ENCODE measurements at regions of chr15 and their contacts with region 1.

Region 1: GRCh38 chr15:45198337-45199135 is 10.8 kb upstream of the SHF start:
- DNase-seq: peak; percentile 99
- H3K4me3 ChIP-seq: peak overlapping the region; percentile 54 to 62 (median 60)
- H3K27ac ChIP-seq: peak overlapping the region; percentile 93 to 98 (median 96)
- H3K4me1 ChIP-seq: peaks cover 0 to 17% (median 7%) of the 10 kb centered on the region in 4 donors
- H3K27me3 ChIP-seq: no peaks in the 10 kb centered on the region
- CTCF ChIP-seq: peak; percentile 41 to 82 (median 62)
- EP300 ChIP-seq: peak in 1 of 4 donors; percentile 76
- POLR2A ChIP-seq: peak; percentile 96 to 98

Region 2: DNA sequence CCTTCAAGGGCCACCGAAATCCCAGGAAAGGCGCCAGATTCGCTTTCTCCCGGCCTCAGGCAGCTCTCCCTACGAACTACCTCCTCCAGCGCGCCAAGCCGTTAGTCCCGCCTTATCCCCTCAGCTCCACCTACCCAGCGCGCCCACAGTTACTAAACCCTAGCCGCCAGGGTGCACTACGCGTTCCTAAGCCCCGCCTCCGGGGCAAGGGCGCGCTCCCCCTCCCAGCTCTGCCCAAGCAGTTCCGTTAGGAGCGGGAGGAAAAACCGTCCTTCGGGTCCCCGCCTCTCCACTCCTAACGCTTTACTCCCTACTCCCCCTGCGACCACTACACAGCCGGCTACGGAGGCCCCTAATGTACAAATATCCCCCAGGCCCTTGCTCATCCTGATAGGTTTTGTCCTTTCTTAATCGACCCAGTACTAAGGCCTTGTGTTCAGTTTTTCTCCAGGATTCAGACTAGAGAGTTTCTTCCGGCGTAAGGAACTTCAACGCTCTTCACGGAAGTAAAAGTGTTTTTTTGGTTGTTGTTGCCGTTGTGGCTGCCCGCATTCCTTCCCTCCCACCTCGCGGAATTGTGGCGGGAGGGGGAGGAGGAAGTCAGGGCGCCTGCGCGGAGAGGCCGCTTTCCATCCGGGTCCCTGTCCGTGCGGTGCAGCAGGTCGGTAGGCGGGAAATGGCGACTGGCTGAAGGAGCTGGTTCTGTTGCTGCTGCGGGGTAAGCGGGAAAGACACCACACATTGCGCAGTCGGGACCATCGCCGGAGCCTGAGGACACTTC is 771.4 kb before region 1 on chr15 and contains the start of gene CTDSPL2:
- intact Hi-C with region 1: loop called (anchors 10 kb)
- DNase-seq: peak; percentile 99
- H3K4me3 ChIP-seq: peak within 1 kb of the TSS; percentile 66 to 89 (median 82)
- H3K27ac ChIP-seq: peak within 1 kb of the TSS; percentile 92 to 95 (median 94)
- H3K4me1 ChIP-seq: peaks cover 0 to 33% (median 26%) of the 10 kb centered on the region in 4 donors
- H3K27me3 ChIP-seq: no peaks in the 10 kb centered on the region
- CTCF ChIP-seq: peak in 2 of 4 experiments; percentile 14 to 19
- EP300 ChIP-seq: no peak
- POLR2A ChIP-seq: peak; percentile 29 to 55
- total RNA-seq, gene CTDSPL2: 25.4 to 57.8 (median 44.9) TPM

Region 3: DNA sequence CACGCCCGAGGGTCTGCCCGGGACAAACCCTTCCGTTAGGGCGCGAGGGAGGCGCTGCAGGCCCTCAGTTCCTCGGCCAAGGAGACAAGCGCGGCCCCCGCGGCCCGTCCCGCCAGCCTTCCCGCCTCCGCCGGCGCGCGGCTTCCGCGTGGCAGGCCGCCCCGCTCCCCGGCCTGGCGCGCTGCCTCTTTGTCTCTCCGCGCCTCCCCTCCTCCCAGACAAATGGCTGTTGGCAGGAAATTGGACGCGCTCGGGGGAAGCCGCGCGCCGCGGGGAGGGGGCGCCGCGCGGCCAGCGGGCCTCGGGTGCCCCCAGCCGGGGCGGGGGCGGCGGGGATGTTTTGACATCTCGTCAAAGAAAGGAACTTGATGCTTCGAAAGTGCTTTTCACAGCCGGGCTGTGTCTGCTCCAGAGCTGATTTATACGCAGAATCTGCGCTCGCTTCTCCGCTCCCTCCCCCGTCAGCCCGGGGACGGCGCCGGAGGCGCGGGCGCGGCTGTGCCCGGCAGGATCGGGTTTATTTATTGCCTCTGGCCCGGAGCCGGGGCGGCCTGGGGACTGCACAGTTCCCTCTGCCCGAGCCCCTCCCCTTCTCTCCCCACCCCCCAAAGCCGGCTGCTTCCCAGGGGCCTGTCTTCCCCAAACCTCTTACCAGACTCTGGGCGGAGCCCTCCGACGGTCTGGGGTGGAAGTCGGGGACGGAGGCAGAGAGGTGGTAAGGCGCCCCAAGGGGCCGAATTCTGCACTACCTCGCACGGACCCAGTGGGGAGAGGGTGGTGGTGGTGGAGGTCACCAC is 31.5 kb before region 1 on chr15:
- intact Hi-C with region 1: loop called (anchors 1 kb)
- DNase-seq: peak; percentile 95
- H3K4me3 ChIP-seq: peak overlapping the region; percentile 46 to 64 (median 56)
- H3K27ac ChIP-seq: peak overlapping the region; percentile 90 to 99 (median 96)
- H3K4me1 ChIP-seq: peaks cover 0 to 33% (median 21%) of the 10 kb centered on the region in 4 donors
- H3K27me3 ChIP-seq: no peaks in the 10 kb centered on the region
- CTCF ChIP-seq: peak; percentile 42 to 77 (median 70)
- EP300 ChIP-seq: no peak
- POLR2A ChIP-seq: peak in 1 of 2 donors; percentile 45

Region 4: DNA sequence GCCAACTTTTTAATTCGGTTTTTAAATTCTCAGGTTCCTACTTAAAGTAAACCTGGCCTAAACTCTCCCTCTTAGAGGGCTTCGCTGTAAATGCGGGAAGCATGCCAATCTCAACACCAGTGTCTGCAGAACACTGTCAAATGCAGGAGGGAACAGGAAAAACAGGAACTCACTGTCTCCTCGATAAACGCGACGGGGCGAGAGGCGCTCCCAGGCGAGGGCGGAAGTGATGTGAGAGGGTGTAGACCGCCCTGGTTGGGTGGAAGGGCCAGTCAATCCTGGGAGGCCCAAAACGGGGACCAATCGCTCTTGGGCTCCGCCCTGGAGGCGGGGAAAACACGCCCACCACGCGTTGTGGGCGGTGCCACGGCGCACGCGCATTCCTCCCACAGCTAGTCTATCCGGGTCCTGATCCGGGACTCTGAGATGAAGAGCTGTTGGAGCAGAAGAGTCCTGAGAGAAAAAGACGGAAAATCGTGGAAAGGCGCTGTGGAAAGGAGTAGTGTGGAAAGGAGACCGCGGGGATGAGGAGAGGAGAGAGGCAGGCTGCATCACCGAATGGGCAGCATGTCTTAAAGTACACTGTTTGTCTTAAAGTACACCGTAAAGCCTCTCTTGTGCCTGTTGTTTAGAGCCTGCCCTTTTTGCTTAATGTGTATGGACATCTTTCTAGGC is 80.6 kb after region 1 on chr15:
- intact Hi-C with region 1: loop called (anchors 2 kb)
- DNase-seq: peak; percentile 99
- H3K4me3 ChIP-seq: peak overlapping the region; percentile 50 to 59 (median 54)
- H3K27ac ChIP-seq: peak overlapping the region; percentile 80 to 90 (median 84)
- H3K4me1 ChIP-seq: peaks cover 0 to 16% (median 10%) of the 10 kb centered on the region in 4 donors
- H3K27me3 ChIP-seq: no peaks in the 10 kb centered on the region
- CTCF ChIP-seq: no peak
- EP300 ChIP-seq: no peak
- POLR2A ChIP-seq: peak; percentile 85 to 87

Region 5: DNA sequence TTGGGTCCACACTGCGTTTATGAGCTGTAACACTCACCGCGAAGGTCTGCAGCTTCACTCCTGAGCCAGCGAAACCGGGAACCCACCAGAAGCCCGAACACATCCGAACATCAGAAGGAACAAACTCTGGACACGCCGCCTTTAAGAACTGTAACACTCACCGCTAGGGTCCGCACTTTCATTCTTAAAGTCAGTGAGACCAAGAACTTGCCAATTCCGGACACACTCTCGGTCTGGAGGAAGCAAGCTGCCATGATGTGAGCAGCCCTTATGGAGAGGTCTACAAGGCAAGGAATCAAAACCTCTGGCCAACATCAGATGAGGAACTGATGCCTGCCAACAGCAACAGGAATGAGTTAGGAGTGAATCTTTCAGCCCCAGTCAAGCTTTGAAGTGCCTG is 116.4 kb after region 1 on chr15:
- intact Hi-C with region 1: no loop called
- DNase-seq: no peak
- H3K4me3 ChIP-seq: no peak overlapping the region
- H3K27ac ChIP-seq: no peak overlapping the region
- H3K4me1 ChIP-seq: no peaks in the 10 kb centered on the region
- H3K27me3 ChIP-seq: no peaks in the 10 kb centered on the region
- CTCF ChIP-seq: no peak
- EP300 ChIP-seq: no peak
- POLR2A ChIP-seq: no peak

Region 6: DNA sequence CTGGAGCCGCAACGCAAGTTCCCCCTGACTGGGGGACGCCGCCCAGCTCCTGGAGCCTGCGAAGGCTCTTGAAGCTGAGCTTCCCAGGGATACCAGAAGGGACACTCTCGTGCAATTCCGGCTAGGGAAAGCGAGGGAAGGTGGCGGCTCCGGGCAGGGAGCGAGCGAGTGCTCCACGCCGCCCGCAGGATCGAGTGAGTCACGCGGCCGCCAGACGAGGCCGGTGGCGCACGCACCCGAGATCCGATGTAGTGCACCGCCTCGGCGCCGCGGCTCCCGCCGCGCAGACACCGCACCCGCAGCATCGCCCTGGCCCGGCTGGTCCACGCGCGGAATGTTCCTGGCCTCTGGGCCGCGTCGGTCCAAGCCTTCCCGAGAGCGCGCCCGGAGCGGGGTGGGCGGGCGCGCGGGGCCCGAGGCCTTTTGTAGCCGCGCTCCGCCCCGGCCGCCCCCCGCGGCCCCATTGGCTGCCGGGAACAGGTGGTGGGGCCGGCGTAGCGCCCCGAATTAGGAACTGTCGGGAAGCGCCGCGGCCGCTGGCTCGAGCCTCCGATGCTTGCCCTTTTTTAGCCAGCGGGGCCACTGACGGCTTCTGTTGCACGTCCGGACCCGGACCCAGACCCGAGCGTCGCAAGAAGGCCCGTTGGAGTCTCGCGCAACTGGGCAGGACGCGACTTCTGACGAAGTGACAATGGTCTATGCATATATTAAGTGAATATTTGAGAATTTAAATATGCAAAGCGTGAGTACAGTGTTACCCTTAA is 179.8 kb after region 1 on chr15 and contains the start of gene GATM:
- intact Hi-C with region 1: loop called (anchors 5 kb)
- DNase-seq: peak; percentile 94
- H3K4me3 ChIP-seq: peak within 1 kb of the TSS; percentile 53 to 65 (median 58)
- H3K27ac ChIP-seq: peak within 1 kb of the TSS; percentile 82 to 93 (median 90)
- H3K4me1 ChIP-seq: peaks cover 0 to 55% (median 33%) of the 10 kb centered on the region in 4 donors
- H3K27me3 ChIP-seq: no peaks in the 10 kb centered on the region
- CTCF ChIP-seq: peak; percentile 9 to 59 (median 39)
- EP300 ChIP-seq: peak in 1 of 4 donors; percentile 21
- POLR2A ChIP-seq: peak; percentile 32 to 57
- total RNA-seq, gene GATM: 38.4 to 51.4 (median 42.0) TPM

Region 7: DNA sequence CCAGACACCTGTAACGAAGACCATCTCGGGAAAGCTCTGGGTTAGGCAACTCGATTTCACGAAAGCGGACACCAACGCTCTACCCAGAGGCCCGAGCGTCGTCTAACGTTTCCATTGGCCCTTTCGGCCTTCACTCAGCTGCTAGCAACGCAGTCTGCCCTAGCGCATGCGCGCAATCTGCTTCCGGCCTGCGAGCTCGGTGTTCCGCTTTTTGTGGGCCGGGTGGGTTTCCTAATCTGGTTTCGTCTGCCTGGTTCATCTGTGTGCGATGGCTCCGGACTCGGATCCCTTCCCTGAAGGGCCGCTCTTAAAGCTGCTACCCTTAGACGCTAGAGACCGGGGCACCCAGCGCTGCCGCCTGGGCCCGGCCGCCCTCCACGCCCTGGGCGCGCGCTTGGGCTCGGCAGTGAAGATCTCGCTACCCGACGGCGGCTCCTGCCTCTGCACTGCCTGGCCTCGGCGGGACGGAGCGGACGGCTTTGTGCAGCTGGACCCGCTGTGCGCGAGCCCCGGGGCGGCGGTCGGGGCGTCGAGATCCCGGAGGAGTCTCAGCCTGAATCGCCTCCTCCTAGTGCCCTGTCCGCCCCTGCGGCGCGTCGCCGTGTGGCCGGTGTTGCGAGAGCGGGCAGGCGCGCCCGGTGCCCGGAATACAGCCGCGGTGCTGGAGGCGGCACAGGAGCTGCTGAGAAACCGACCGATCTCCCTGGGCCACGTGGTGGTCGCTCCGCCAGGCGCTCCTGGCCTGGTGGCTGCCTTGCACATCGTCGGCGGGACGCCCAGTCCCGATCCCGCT is 203.8 kb after region 1 on chr15:
- intact Hi-C with region 1: loop called (anchors 2 kb)
- DNase-seq: peak; percentile 99
- H3K4me3 ChIP-seq: peak overlapping the region; percentile 70 to 96 (median 88)
- H3K27ac ChIP-seq: peak overlapping the region; percentile 90 to 96 (median 92)
- H3K4me1 ChIP-seq: peaks cover 0 to 37% (median 23%) of the 10 kb centered on the region in 4 donors
- H3K27me3 ChIP-seq: no peaks in the 10 kb centered on the region
- CTCF ChIP-seq: peak in 1 of 4 experiments; percentile 18
- EP300 ChIP-seq: no peak
- POLR2A ChIP-seq: peak; percentile 73 to 74

Region 8: GRCh38 chr15:45634442-45635190 is 436.1 kb after region 1 on chr15 and contains the start of gene SQOR:
- intact Hi-C with region 1: loop called (anchors 2 kb)
- DNase-seq: peak; percentile 95
- H3K4me3 ChIP-seq: peak within 1 kb of the TSS; percentile 55 to 82 (median 62)
- H3K27ac ChIP-seq: peak within 1 kb of the TSS; percentile 89 to 95 (median 94)
- H3K4me1 ChIP-seq: peaks cover 0 to 44% (median 32%) of the 10 kb centered on the region in 4 donors
- H3K27me3 ChIP-seq: no peaks in the 10 kb centered on the region
- CTCF ChIP-seq: no peak
- EP300 ChIP-seq: no peak
- POLR2A ChIP-seq: peak in 1 of 2 donors; percentile 80
- total RNA-seq, gene SQOR: 60.4 to 83.4 (median 67.7) TPM